BJ (cell line): ENCODE measurements at regions of chr17 and their contacts with region 1.

Region 1: GRCh38 chr17:73156166-73156840 is 8.5 kb upstream of the SSTR2 start:
- DNase-seq: no peak
- H3K4me3 ChIP-seq: no peak overlapping the region
- H3K27me3 ChIP-seq: peaks cover 2% of the 10 kb centered on the region
- CTCF ChIP-seq: peak; percentile 93

Region 2: DNA sequence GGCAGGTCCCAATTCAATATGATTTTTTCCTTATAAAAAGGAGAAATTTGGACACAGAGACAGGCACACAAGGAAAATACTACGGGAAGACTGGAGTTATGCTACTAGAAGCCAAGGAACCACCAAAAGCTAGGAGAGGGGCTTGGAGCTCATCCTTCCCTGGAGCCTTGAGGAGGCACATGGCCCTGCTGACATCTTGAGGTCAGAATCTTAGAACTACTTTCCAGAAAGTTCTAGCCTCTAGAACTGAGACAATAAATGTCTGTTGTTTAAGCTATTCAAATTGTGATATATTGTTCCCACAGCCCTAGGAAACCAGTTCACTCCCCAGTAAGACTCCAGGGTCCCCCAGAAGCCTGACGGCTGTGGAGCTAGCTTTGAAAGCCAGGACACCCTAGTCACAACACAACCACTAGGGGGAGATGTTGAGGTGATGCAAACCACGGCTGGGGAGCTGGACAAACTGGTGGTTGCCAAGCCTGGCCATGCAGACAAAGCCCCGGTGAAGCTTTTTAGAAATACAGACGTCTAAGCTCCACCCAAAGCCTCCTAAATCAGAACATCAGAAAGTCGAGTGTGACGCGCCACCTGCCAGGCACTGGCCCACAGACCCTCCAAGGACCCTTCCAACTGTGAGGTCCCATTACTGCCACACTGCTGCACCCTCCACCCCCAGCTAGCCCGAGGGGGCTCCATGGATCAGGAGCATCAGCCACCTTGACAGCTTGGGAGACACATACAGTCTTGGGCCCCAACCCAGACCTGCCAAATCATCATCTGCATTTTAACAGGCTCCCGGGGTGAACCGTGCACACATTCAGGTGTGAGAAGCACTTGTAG is 170.2 kb before region 1 on chr17:
- CTCF ChIA-PET with region 1: interaction called, 62 read pairs
- POLR2A ChIA-PET with region 1: no interaction called
- DNase-seq: no peak
- H3K4me3 ChIP-seq: no peak overlapping the region
- H3K27me3 ChIP-seq: no peaks in the 10 kb centered on the region
- CTCF ChIP-seq: peak; percentile 86

Region 3: GRCh38 chr17:73166731-73167581 is 10.7 kb after region 1 on chr17:
- CTCF ChIA-PET with region 1: interaction called, 25 read pairs
- POLR2A ChIA-PET with region 1: no interaction called
- DNase-seq: no peak
- H3K4me3 ChIP-seq: no peak overlapping the region
- H3K27me3 ChIP-seq: peaks cover 46% of the 10 kb centered on the region
- CTCF ChIP-seq: no peak